Sigmoid colon (tissue), 7 donors: ENCODE measurements at regions of chr16 and their contacts with region 1.

Region 1: DNA sequence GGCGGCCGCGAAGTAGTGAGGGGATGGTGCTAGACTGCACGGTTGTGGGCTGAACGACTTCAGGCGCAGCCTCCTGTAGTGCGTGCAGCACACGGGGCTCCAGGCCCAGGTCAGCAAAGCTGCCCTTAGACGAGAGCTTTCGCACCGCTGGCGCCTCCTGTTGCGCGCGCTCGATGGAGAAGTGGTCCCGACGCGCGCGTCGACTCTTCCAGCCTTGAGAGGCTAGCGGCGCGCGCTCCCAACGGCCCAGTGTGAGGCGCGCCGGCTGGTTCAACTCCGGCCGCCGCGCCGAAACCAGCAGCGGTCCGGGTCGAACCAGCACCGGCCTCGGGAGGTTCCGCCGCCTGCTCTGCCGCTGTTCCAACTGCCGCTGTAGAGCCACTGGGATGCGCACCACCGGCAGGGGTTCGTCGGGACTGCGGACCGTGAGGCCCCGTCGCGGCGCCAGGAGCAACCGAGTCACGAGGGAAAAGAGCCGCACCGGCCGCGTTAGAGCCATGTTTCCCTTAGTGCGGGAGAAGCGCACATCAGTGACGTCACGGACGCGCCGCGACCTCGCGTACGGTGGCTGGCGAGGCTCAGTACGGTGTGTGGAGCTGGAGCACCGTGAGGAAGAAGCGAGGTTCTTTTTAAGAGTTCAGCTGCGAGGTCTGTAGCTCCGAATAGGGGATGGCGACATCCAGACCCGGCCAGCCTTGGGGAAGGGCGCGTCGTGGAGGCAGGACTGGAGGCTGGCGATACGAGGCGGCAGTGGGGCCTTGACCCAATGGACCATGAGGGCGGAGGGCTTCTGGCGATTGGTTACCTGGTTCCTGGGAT is at the starts of genes DDX28 and DUS2:
- DNase-seq: peak; percentile 95
- H3K4me3 ChIP-seq: peak within 1 kb of the TSS; percentile 72 to 97 (median 88)
- H3K27ac ChIP-seq: peak within 1 kb of the TSS; percentile 82 to 89 (median 84)
- H3K4me1 ChIP-seq: peaks cover 0 to 30% (median 28%) of the 10 kb centered on the region in 4 donors
- H3K27me3 ChIP-seq: no peaks in the 10 kb centered on the region
- CTCF ChIP-seq: no peak
- EP300 ChIP-seq: peak in 1 of 4 donors; percentile 49
- POLR2A ChIP-seq: peak; percentile 36 to 37
- total RNA-seq, gene DDX28: 5.0 to 6.9 (median 5.8) TPM
- total RNA-seq, gene DUS2: 3.6 to 7.3 (median 5.3) TPM

Region 2: GRCh38 chr16:67806428-67807147 is 216.3 kb before region 1 on chr16 and contains the starts of genes RANBP10 and TSNAXIP1:
- intact Hi-C with region 1: loop called (anchors 10 kb)
- DNase-seq: peak; percentile 99
- H3K4me3 ChIP-seq: peak within 1 kb of the TSS; percentile 83 to 99 (median 96)
- H3K27ac ChIP-seq: peak within 1 kb of the TSS; percentile 80 to 92 (median 86)
- H3K4me1 ChIP-seq: peaks cover 0 to 28% (median 22%) of the 10 kb centered on the region in 4 donors
- H3K27me3 ChIP-seq: no peaks in the 10 kb centered on the region
- CTCF ChIP-seq: no peak
- EP300 ChIP-seq: no peak
- POLR2A ChIP-seq: peak; percentile 39 to 75
- total RNA-seq, gene RANBP10: 7.1 to 10.0 (median 7.6) TPM
- total RNA-seq, gene TSNAXIP1: 1.1 to 2.9 (median 1.8) TPM